Activated T-helper 2 cell treated with anti-CD3 and anti-CD28 coated beads, Interferon-gamma antibody, Interleukin-2, Interleukin-4, amounts not matched to agents 10 μg/mL and 5 μg/mL and 100 μg/mL, durations not matched to agents 14 hours and 24 hours and 36 hours (primary cell): ENCODE measurements at regions of chr1 and their contacts with region 1.

Region 1: GRCh38 chr1:40315239-40315794 is 1.8 kb downstream of the COL9A2 start:
- DNase-seq: peak; percentile 81
- H3K4me3 Mint-ChIP-seq: peak overlapping the region; percentile 78
- H3K27ac Mint-ChIP-seq: no peak overlapping the region
- H3K4me1 Mint-ChIP-seq: peaks cover 45% of the 10 kb centered on the region
- H3K27me3 Mint-ChIP-seq: peaks cover 16% of the 10 kb centered on the region

Region 2: GRCh38 chr1:40241362-40241761 is 74.0 kb before region 1 on chr1:
- intact Hi-C with region 1: loop called (anchors 5 kb)
- DNase-seq: no peak
- H3K4me3 Mint-ChIP-seq: peak overlapping the region; percentile 59
- H3K27ac Mint-ChIP-seq: peak overlapping the region; percentile 83
- H3K4me1 Mint-ChIP-seq: peaks cover 59% of the 10 kb centered on the region
- H3K27me3 Mint-ChIP-seq: no peaks in the 10 kb centered on the region

Region 3: DNA sequence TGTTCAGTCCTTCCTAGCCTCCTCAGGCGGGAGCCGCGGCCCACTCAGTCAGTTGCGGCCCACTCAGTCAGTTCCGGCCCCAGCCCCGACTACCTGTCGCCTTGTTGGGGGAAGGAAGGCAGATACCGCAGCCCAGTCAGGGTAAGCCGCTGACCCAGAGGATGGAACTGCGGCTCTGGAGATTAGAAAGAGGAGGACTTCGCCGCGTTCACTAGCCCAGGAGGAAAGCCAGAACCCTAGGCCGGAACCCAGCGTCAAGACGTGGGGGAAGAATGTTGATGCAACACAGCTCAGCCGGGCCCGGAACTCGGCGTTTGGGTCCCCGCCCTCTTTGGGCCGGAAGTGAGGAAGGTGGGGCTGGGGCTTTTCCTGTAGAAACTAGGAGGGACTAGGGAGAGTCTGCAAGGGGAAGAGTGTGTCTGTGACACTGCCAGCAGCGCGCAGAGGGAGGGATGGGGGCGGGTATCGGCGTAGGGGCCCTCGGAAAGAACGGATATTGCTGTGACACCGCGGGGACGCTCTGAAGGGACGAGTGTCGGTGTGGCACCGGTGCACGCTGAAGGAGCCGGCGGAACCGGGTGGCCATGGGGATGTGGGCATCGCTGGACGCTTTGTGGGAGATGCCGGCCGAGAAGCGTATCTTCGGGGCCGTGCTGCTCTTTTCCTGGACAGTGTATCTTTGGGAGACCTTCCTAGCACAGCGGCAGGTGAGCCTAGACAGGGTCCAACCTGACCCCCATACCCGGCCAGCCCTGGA is 57.5 kb before region 1 on chr1 and contains the start of gene ZMPSTE24:
- intact Hi-C with region 1: loop called (anchors 5 kb)
- DNase-seq: peak; percentile 95
- H3K4me3 Mint-ChIP-seq: peak within 1 kb of the TSS; percentile 94
- H3K27ac Mint-ChIP-seq: peak within 1 kb of the TSS; percentile 98
- H3K4me1 Mint-ChIP-seq: peaks cover 38% of the 10 kb centered on the region
- H3K27me3 Mint-ChIP-seq: no peaks in the 10 kb centered on the region
- total RNA-seq, gene ZMPSTE24: 48.2 TPM in 2 replicates

Region 4: GRCh38 chr1:40338745-40339424 is 23.6 kb after region 1 on chr1:
- intact Hi-C with region 1: no loop called
- DNase-seq: peak; percentile 82
- H3K4me3 Mint-ChIP-seq: no peak overlapping the region
- H3K27ac Mint-ChIP-seq: no peak overlapping the region
- H3K4me1 Mint-ChIP-seq: peaks cover 37% of the 10 kb centered on the region
- H3K27me3 Mint-ChIP-seq: no peaks in the 10 kb centered on the region

Region 5: GRCh38 chr1:40385437-40386358 is 70.4 kb after region 1 on chr1:
- intact Hi-C with region 1: loop called (anchors 5 kb)
- DNase-seq: peak; percentile 59
- H3K4me3 Mint-ChIP-seq: peak overlapping the region; percentile 85
- H3K27ac Mint-ChIP-seq: peak overlapping the region; percentile 99
- H3K4me1 Mint-ChIP-seq: peaks cover 86% of the 10 kb centered on the region
- H3K27me3 Mint-ChIP-seq: no peaks in the 10 kb centered on the region